Breast epithelium (tissue), 4 donors: ENCODE measurements at regions of chr18 and their contacts with region 1.

Region 1: DNA sequence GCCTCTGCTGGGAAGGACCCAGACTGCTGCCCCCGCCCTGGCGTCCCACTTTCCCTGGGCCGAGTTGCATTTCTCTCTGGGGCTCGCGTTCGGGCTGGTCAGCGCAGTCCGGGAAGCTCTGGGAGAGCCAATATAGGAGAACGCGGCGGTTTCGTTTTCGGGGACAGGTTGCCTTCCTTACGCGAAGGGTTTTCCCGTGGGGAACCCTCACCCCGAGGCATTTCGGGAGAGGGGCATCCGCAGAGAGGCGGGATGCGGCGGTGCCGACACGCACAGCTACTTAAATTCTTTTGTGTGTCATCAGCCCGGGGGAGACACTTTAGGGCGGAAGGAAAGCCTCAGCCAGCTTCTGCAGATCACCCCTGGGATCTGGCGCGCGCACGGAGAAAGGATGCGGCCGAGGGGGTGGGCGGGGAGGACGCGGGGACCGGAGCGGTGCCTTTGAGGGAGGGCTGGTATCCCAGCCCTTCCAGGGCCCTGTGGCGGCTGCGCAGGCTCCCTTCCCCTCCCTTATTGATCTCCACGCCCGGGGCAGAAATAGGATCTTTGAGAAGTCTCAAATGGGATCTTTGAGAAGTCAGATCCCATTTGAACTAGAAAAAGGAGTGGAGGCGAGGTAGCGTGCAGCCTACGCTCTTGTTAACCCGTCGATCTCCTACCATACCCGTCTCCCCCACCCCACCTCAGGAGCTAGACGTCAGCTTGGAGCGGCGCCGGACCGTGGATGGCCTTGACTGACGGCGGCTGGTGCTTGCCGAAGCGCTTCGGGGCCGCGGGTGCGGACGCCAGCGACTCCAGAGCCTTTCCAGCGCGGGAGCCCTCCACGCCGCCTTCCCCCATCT is 1.3 kb downstream of the GATA6 start:
- DNase-seq: peak; percentile 37 to 68
- H3K4me3 ChIP-seq: peak overlapping the region; percentile 66 to 90 (median 79)
- H3K27ac ChIP-seq: peak overlapping the region; percentile 85 to 87
- H3K4me1 ChIP-seq: peaks cover 6 to 10% of the 10 kb centered on the region in 2 donors
- H3K27me3 ChIP-seq: peaks cover 0 to 32% of the 10 kb centered on the region in 2 donors
- CTCF ChIP-seq: no peak
- POLR2A ChIP-seq: no peak

Region 2: GRCh38 chr18:21682371-21683051 is 488.1 kb before region 1 on chr18:
- intact Hi-C with region 1: loop called (anchors 5 kb)
- DNase-seq: no peak
- H3K4me3 ChIP-seq: peak overlapping the region; percentile 25 to 54 (median 32)
- H3K27ac ChIP-seq: peak overlapping the region; percentile 50 to 58
- H3K4me1 ChIP-seq: no peaks in the 10 kb centered on the region
- H3K27me3 ChIP-seq: no peaks in the 10 kb centered on the region
- CTCF ChIP-seq: no peak
- POLR2A ChIP-seq: no peak

Region 3: DNA sequence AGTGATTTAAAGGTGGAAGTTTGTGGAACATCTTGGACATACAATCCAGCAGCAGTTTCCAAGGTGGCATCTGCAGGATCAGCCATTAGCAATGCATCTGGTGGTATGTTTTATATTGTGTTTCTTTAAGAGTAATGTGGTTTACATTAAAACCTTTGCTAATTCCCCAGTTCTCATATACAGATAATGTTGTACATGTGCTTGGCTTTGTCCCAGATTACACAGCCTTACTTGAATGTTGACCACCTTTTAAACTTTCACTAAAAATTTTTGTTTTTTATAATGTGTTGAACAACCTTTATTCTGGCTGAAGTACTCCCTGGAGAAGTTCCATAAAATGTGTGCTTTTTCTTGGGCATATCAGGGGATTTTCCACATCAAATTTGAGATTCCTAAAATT is 372.5 kb before region 1 on chr18:
- intact Hi-C with region 1: no loop called
- DNase-seq: no peak
- H3K4me3 ChIP-seq: no peak overlapping the region
- H3K27ac ChIP-seq: no peak overlapping the region
- H3K4me1 ChIP-seq: no peaks in the 10 kb centered on the region
- H3K27me3 ChIP-seq: no peaks in the 10 kb centered on the region
- CTCF ChIP-seq: no peak
- POLR2A ChIP-seq: no peak

Region 4: DNA sequence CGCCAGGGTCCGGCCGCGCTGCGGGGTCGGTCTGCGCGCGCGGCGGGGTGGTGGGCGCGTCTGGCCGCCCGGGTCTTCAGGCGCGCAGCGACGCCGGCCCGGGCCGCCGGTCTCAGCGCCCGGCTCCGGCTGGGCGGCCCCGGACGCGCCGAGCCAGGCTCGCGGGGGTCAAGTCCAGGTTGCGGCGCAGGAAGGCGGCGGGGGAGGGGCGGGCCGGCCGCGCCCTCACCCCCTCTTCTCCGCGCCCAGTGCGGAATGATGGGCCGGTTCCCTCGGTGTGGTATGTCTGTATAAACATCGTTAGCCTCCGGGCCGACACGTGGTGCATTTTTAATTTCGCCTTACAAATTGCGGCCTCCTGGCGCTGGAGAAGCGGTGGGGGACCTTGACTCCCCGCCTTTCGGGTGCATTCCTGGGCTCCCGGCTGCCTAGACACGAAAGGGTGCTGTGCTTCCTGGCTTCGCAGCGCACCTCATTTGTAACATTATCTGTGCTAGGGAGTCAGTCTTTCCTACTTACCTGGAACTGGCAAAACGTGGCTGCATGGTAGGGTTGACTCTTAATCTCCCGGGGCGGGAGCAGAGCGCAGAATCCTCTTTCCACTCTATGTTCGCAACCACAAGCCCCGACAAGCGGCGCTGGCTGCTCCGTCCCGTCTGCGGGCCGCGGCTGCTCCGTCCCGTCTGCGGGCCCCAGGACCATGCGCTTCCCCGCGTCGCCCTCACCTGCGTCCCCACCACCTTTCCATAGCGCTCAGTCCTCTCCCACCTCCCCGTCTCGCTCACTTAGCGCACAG is 178.1 kb after region 1 on chr18:
- intact Hi-C with region 1: loop called (anchors 10 kb)
- DNase-seq: peak; percentile 67 to 71
- H3K4me3 ChIP-seq: peak overlapping the region; percentile 36 to 73 (median 58)
- H3K27ac ChIP-seq: peak overlapping the region; percentile 70 to 84
- H3K4me1 ChIP-seq: no peaks in the 10 kb centered on the region
- H3K27me3 ChIP-seq: no peaks in the 10 kb centered on the region
- CTCF ChIP-seq: no peak
- POLR2A ChIP-seq: no peak

Region 5: DNA sequence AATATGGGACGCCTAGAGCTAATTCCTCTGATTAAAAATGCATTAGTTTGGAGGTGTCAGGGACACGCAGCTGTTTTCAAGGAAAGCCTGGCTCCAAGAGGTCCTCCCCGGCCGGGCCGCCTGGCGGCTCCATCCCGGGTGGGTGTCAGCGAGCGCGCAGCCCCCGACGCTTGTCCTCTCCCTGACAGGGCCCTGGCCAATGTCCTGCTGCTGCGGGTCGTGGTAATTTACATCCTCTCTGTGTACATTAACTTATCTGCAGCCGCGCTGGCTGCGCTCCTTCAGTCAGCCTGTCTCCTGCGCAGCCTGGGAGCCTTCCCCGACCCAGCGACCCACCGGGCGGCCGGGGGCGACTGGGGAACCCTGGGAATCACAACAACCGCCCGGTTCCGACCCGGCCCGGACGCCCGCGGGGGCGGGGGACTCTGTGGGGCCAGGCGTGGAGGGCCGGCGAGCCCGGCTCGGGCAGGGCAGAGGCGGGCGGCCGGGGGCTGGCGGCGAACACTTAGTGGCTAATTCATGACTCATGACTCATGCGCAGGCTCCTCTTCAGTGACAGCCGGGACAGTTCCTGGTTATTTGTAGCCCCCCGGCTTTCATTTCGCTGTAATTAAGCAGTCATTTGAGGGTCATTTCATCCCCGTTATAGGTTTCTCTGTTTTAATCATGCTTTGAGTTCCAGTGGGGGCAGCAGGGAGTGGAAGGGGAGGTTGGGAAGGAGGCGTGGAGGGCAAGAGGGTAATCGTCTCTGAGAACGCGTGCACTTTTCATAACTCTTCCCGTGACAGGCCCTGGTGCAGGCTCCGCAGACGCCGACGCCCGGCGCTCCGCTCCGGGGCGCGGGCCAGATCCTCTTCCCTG is 389.0 kb after region 1 on chr18:
- intact Hi-C with region 1: loop called (anchors 10 kb)
- DNase-seq: peak in 1 of 2 donors; percentile 55
- H3K4me3 ChIP-seq: peak overlapping the region; percentile 50 to 81 (median 50)
- H3K27ac ChIP-seq: peak overlapping the region; percentile 58 to 76
- H3K4me1 ChIP-seq: peaks cover 0 to 5% of the 10 kb centered on the region in 2 donors
- H3K27me3 ChIP-seq: no peaks in the 10 kb centered on the region
- CTCF ChIP-seq: peak in 2 of 3 donors; percentile 22 to 38
- POLR2A ChIP-seq: no peak